PC-9 (cell line): ENCODE measurements at regions of chr7 and their contacts with region 1.

Region 1: GRCh38 chr7:95684037-95684436 is 87.7 kb upstream of the PDK4 start:
- DNase-seq: peak in 1 of 2 experiments; percentile 36
- H3K4me3 ChIP-seq: no peak overlapping the region
- H3K27ac ChIP-seq: no peak overlapping the region
- H3K4me1 ChIP-seq: no peaks in the 10 kb centered on the region
- H3K27me3 ChIP-seq: no peaks in the 10 kb centered on the region
- CTCF ChIP-seq: peak; percentile 74

Region 2: GRCh38 chr7:95511716-95512260 is 172.2 kb before region 1 on chr7:
- CTCF ChIA-PET with region 1: interaction called, 53 read pairs
- POLR2A ChIA-PET with region 1: no interaction called
- intact Hi-C with region 1: loop called (anchors 1 kb)
- DNase-seq: peak; percentile 36 to 53
- H3K4me3 ChIP-seq: no peak overlapping the region
- H3K27ac ChIP-seq: no peak overlapping the region
- H3K4me1 ChIP-seq: 0 out of 2 replicates have a peak, but pooled peaks cover 4% of the 10 kb centered on the region
- H3K27me3 ChIP-seq: no peaks in the 10 kb centered on the region
- CTCF ChIP-seq: peak; percentile 84

Region 3: DNA sequence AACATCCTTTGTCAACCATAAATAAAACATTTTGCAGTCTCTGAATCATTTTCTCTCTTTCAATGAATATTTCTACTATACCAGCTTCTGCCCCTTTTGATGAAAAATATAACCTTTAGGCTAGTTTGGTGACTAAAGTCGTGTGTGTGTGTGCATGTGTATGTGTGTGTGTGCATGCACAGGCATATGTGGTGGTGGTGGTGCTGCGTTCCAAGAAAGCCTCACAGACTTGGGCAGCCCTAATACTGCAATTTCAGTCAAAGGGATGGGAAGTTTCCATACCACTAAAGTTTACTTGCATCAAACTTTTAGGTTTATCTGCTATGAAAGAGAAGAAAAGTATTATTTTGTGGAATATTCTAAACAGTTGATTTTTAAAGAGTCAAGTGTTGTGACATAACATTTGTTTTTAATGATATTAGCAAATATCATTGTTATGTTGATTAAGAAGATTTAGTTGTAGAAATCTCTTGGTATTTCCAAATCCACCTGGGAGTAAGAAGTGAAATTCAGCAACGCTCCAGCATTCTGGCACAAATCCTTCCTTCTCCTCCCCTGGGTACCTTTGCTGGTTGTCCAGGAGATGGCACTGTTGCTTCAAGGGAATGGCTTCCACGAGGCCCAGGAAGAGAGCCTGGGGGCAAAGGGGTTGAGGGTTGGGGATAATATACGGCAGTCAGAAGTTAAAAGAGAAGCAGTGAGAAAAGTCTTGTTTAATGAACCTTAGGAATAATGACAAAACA is 156.8 kb before region 1 on chr7:
- CTCF ChIA-PET with region 1: interaction called, 22 read pairs
- POLR2A ChIA-PET with region 1: no interaction called
- intact Hi-C with region 1: loop called (anchors 1 kb)
- DNase-seq: peak; percentile 42 to 47
- H3K4me3 ChIP-seq: no peak overlapping the region
- H3K27ac ChIP-seq: no peak overlapping the region
- H3K4me1 ChIP-seq: peaks cover 10% of the 10 kb centered on the region; the same call in 1 of the 2 replicates
- H3K27me3 ChIP-seq: no peaks in the 10 kb centered on the region
- CTCF ChIP-seq: peak; percentile 95

Region 4: DNA sequence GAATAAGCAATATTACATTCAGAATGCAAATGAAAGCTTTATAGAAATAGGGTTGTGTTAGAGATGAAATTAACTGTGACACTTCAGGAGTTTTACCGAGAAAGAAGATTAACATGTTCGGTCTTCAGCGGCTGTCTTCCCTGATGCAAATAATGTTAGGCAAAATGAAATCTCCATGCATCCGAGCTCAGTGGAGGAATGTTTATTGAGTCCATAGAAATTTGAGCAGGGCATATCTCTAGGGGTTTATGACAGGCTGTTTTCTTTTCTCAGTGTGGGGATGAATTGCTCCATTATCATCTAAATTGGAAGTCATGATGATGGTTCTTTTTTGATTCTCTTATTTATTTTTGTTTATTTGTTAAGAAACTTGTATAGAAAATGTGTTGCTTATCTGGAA is 120.0 kb after region 1 on chr7:
- CTCF ChIA-PET with region 1: no interaction called
- POLR2A ChIA-PET with region 1: no interaction called
- intact Hi-C with region 1: no loop called
- DNase-seq: no peak
- H3K4me3 ChIP-seq: no peak overlapping the region
- H3K27ac ChIP-seq: no peak overlapping the region
- H3K4me1 ChIP-seq: no peaks in the 10 kb centered on the region
- H3K27me3 ChIP-seq: 0 out of 2 replicates have a peak, but pooled peaks cover 8% of the 10 kb centered on the region
- CTCF ChIP-seq: no peak

Region 5: DNA sequence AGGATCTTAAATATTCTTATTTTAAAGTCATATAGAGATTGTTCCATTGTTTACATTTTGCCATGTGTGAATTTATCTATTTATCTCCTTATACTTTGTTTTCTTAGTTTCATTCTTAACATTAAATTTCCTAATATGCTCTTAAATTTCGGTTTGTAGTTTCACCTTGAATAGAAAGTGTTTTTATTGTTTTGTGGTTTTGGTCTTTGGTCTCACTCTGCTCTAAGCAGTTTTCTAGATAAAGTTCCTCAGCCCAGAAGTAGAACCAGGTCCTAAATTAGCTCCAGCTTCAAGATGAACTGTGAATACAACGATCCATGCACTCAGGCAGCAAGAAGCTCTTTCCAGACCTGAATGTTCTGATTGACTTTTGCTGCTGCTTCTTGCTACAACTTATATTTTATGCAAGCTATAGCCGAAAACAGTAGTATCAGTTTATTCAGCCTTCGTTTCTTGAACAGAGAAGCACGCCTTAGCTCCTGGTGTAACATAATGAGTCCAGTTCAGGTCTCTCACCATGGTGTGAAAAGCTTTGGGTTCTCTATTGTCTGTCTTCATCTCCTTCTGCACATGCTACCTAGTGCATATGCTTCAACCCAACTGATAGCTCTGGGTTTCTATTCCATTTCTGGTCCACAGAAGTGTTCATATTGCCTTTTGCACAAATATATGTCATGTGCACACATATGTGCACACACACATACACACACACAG is 930.3 kb after region 1 on chr7:
- CTCF ChIA-PET with region 1: no interaction called
- POLR2A ChIA-PET with region 1: no interaction called
- intact Hi-C with region 1: no loop called
- DNase-seq: no peak
- H3K4me3 ChIP-seq: no peak overlapping the region
- H3K27ac ChIP-seq: no peak overlapping the region
- H3K4me1 ChIP-seq: no peaks in the 10 kb centered on the region
- H3K27me3 ChIP-seq: no peaks in the 10 kb centered on the region
- CTCF ChIP-seq: no peak